GM12878 (cell line): ENCODE measurements at regions of chr7 and their contacts with region 1.

Region 1: GRCh38 chr7:54292171-54292925 is 249.8 kb upstream of the VSTM2A start:
- DNase-seq: no peak
- ATAC-seq: no peak
- H3K4me3 ChIP-seq: no peak overlapping the region
- H3K27ac ChIP-seq: no peak overlapping the region
- H3K4me1 ChIP-seq: no peaks in the 10 kb centered on the region
- H3K27me3 ChIP-seq: no peaks in the 10 kb centered on the region
- CTCF ChIP-seq: no peak
- EP300 ChIP-seq: no peak
- POLR2A ChIP-seq: no peak
- RAD21 ChIP-seq: no peak

Region 2: GRCh38 chr7:54215424-54215823 is 76.9 kb before region 1 on chr7:
- CTCF ChIA-PET with region 1: no interaction called
- POLR2A ChIA-PET with region 1: no interaction called
- RAD21 ChIA-PET with region 1: no interaction called
- SMC1A ChIA-PET with region 1: no interaction called
- in situ Hi-C with region 1: loop called (anchors 10 kb)
- intact Hi-C with region 1: no loop called
- DNase-seq: no peak
- ATAC-seq: no peak
- H3K4me3 ChIP-seq: no peak overlapping the region
- H3K27ac ChIP-seq: no peak overlapping the region
- H3K4me1 ChIP-seq: no peaks in the 10 kb centered on the region
- H3K27me3 ChIP-seq: no peaks in the 10 kb centered on the region
- CTCF ChIP-seq: no peak
- EP300 ChIP-seq: no peak
- POLR2A ChIP-seq: no peak
- RAD21 ChIP-seq: no peak